Aorta (tissue), 5 donors: ENCODE measurements at regions of chr22 and their contacts with region 1.

Region 1: GRCh38 chr22:50030297-50031188 is 18.0 kb upstream of the IL17REL start:
- DNase-seq: peak; percentile 75 to 93
- ATAC-seq: peak; percentile 79
- H3K4me3 ChIP-seq: no peak overlapping the region
- H3K27ac ChIP-seq: no peak overlapping the region
- H3K4me1 ChIP-seq: no peaks in the 10 kb centered on the region
- H3K27me3 ChIP-seq: no peaks in the 10 kb centered on the region

Region 2: GRCh38 chr22:49767355-49768062 is 263.0 kb before region 1 on chr22:
- intact Hi-C with region 1: loop called in 1 of 2 experiments (anchors 10 kb)
- DNase-seq: peak; percentile 22 to 35
- ATAC-seq: no peak
- H3K4me3 ChIP-seq: no peak overlapping the region
- H3K27ac ChIP-seq: no peak overlapping the region
- H3K4me1 ChIP-seq: no peaks in the 10 kb centered on the region
- H3K27me3 ChIP-seq: no peaks in the 10 kb centered on the region

Region 3: GRCh38 chr22:49979587-49980264 is 50.8 kb before region 1 on chr22:
- intact Hi-C with region 1: loop called (anchors 5 kb)
- DNase-seq: peak; percentile 38 to 51
- ATAC-seq: peak; percentile 55
- H3K4me3 ChIP-seq: no peak overlapping the region
- H3K27ac ChIP-seq: no peak overlapping the region
- H3K4me1 ChIP-seq: no peaks in the 10 kb centered on the region
- H3K27me3 ChIP-seq: no peaks in the 10 kb centered on the region

Region 4: GRCh38 chr22:50089682-50090411 is 59.3 kb after region 1 on chr22 and contains the start of gene MOV10L1:
- intact Hi-C with region 1: no loop called
- DNase-seq: peak in 1 of 2 donors; percentile 73
- ATAC-seq: peak; percentile 55
- H3K4me3 ChIP-seq: no peak within 1 kb of the TSS
- H3K27ac ChIP-seq: no peak within 1 kb of the TSS
- H3K4me1 ChIP-seq: no peaks in the 10 kb centered on the region
- H3K27me3 ChIP-seq: no peaks in the 10 kb centered on the region
- total RNA-seq, gene MOV10L1: 0.10 to 3.2 TPM